Activated CD4-positive, alpha-beta T cell treated with anti-CD3 and anti-CD28 coated beads, Interleukin-2, amount 10 ng/mL, durations not matched to agents 24 days and 14 days (primary cell): ENCODE measurements at regions of chr19 and their contacts with region 1.

Region 1: DNA sequence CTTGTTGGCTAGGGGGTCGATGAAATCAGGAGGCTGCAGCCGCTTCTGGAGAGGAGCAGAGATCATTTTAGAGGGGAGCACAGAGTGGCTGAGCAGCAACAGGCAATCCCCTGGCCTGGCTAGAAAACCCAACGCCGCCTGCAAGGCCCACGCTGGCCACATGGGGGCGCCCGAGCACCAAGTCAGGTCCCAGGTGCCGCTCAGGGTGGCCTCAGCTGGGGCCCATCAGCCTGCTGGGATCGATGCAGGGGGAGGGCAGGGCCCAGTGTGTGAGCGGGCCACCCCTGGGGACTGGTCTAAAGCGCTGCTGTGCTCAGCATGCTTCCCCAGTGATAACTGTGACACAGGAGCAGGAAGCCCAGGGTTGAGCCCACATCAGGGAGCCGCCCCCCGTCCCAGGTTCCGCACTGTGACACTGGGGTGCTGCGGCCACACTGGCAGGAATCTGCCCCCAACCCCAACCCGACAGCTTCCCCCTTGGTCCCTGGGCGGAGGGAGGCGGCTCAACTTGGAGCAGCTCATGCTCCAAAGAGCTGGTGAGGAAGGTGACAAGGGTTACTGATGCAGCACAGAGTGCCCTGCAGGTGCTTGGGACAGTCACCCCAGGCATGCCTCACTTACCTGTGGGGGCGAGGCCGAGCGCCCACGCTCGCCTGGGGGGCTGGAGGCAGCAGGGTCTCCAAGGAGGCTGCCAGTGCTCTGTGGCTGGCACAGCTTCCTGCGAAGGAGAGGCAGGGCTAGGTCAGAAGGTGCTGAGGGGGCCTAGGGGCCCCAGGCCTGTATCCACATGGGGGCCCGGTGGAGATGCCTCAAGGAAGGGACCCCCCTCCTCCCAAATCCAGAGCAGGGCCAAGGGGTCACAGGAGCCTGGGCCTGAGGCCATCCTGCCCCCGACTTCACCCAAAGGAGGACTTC is 13.3 kb upstream of the ISYNA1 start:
- DNase-seq: peak; percentile 97
- H3K4me3 Mint-ChIP-seq: no peak overlapping the region
- H3K27ac Mint-ChIP-seq: no peak overlapping the region
- H3K4me1 Mint-ChIP-seq: peaks cover 2% of the 10 kb centered on the region
- H3K27me3 Mint-ChIP-seq: no peaks in the 10 kb centered on the region

Region 2: GRCh38 chr19:18271433-18271841 is 179.8 kb before region 1 on chr19:
- intact Hi-C with region 1: no loop called
- DNase-seq: no peak
- H3K4me3 Mint-ChIP-seq: no peak overlapping the region
- H3K27ac Mint-ChIP-seq: no peak overlapping the region
- H3K4me1 Mint-ChIP-seq: peaks cover 14% of the 10 kb centered on the region
- H3K27me3 Mint-ChIP-seq: no peaks in the 10 kb centered on the region

Region 3: DNA sequence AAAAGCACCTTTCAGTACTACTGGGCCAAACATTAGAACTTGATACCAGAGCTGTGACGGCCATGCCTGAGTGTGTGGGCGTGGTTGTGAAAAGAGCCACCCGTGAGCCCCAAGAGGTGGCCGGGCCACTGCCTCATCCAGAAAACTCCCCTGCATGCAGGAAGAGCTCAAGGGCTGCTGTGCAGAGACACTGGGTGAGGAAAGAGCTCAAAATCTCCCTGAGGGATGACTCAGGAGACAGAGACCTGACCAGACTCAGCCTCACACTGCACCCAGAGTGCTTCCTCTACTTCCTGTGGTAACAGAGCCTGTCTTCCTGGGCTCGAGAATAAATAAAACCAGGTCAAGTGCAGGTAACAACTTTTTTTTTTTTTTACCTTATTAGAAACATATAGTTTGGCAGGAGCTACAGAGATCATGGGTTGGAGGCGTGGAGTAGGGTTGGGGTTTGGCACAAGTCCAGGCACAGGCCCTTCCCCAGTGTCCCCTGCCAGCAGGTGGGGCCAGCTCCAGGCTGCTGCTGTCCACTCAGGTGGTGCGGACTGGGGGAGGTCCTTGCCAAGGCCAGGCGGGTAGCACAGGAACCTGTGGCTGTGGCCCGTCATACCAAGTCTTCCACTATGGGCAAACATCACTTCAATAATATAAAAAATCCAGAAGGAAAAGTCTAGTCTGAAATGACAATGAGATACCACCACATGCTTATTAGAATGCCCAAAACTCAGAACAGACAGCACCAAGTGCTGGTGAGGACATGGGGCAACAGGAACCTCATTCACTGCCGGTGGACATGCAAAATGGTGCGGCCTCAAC is 45.2 kb after region 1 on chr19:
- intact Hi-C with region 1: no loop called
- DNase-seq: peak; percentile 85
- H3K4me3 Mint-ChIP-seq: peak overlapping the region; percentile 66
- H3K27ac Mint-ChIP-seq: peak overlapping the region; percentile 89
- H3K4me1 Mint-ChIP-seq: peaks cover 60% of the 10 kb centered on the region
- H3K27me3 Mint-ChIP-seq: no peaks in the 10 kb centered on the region

Region 4: DNA sequence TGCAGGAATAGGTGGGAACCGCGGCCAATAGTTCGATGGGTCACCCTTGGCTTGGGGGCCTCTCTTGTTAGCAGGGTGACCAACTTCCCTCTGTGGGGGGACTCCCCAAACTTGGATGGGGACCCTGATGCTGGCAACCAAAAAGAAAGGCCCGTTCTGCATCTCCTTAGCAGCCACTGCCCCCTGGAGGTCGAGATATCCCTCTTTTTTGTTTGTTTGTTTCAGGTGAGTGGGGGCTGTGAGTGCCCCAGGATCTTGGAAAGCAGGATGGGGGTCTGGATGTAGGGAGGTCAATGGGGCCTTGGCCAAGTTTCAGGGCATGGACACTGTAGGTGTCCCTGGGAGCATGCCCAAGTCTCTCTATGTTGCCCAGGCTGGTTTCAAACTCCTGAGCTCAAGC is 224.6 kb after region 1 on chr19:
- intact Hi-C with region 1: loop called (anchors 10 kb)
- DNase-seq: peak; percentile 74
- H3K4me3 Mint-ChIP-seq: no peak overlapping the region
- H3K27ac Mint-ChIP-seq: no peak overlapping the region
- H3K4me1 Mint-ChIP-seq: no peaks in the 10 kb centered on the region
- H3K27me3 Mint-ChIP-seq: no peaks in the 10 kb centered on the region